ENCODE measurements at regions of chr12 and their contacts with region 1.

Region 1: GRCh38 chr12:53205747-53206419 is 1.2 kb downstream of the ITGB7 start:
- DNase-seq: peak; percentile 92
- H3K4me3 Mint-ChIP-seq: peak overlapping the region; percentile 84
- H3K27ac Mint-ChIP-seq: peak overlapping the region; percentile 83
- H3K4me1 Mint-ChIP-seq: peaks cover 77% of the 10 kb centered on the region
- H3K27me3 Mint-ChIP-seq: no peaks in the 10 kb centered on the region

Region 2: GRCh38 chr12:52543985-52544883 is 661.6 kb before region 1 on chr12:
- CTCF ChIA-PET with region 1: no interaction called
- POLR2A ChIA-PET with region 1: no interaction called
- intact Hi-C with region 1: no loop called
- DNase-seq: no peak
- H3K4me3 Mint-ChIP-seq: no peak overlapping the region
- H3K27ac Mint-ChIP-seq: no peak overlapping the region
- H3K4me1 Mint-ChIP-seq: no peaks in the 10 kb centered on the region
- H3K27me3 Mint-ChIP-seq: no peaks in the 10 kb centered on the region

Region 3: DNA sequence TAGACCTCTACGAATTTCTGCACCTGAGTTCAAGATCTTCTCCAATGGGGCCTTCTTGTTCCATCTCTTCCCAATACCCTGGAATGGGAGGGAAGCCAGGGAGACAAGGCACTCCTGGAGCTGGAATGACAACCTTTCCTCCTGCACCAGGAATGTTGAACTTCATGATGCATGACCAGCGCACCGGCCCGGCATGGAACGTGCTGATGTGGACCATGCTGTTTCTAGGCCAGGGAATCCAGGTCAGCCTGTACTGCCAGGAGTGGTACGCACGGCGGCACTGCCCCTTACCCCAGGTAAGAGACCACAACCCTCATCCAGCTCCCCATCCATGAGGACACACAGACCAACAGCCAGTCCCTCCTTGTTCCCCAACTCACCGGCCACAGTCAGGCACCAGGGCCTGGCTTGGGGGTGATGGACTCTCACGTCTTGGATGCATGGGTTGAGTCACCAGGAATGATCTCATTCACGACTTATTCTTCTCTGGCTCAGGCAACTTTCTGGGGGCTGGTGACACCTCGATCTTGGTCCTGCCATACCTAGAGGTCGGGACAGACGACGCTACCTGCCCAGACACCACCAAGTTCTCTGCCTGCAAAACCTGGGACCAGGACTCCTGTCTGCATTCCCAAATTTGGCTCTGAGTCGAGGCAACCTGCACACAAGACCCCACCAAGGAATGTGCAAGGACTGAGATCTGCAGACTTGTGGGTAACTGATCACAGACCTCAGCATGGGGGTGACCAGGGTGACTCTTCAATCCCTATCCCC is 82.1 kb before region 1 on chr12:
- CTCF ChIA-PET with region 1: no interaction called
- POLR2A ChIA-PET with region 1: no interaction called
- intact Hi-C with region 1: no loop called
- DNase-seq: no peak
- H3K4me3 Mint-ChIP-seq: no peak overlapping the region
- H3K27ac Mint-ChIP-seq: no peak overlapping the region
- H3K4me1 Mint-ChIP-seq: no peaks in the 10 kb centered on the region
- H3K27me3 Mint-ChIP-seq: no peaks in the 10 kb centered on the region

Region 4: DNA sequence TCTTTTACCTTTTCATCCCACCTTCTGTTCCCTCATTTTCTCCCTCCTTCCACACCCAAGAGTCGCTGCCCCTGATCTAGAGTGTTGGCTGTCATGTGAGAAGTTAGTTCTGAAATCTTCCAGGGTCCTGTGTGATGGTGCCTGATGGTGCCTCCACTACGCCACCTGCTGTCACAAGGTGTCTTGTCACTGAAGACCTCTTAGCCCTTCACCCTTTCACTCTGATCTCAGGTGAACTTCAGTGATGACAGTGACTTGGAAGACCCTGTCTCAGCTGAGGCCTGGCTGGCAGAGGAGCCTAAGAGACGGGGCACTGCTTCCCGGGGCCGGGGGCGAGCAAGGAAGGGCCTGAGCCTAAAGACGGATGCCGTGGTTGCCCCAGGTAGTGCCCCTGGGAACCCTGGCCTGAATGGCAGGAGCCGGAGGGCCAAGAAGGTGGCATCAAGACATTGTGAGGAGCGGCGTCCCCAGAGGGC is 81.9 kb after region 1 on chr12:
- CTCF ChIA-PET with region 1: interaction called, 21 read pairs
- POLR2A ChIA-PET with region 1: no interaction called
- intact Hi-C with region 1: no loop called
- DNase-seq: peak; percentile 76
- H3K4me3 Mint-ChIP-seq: no peak overlapping the region
- H3K27ac Mint-ChIP-seq: peak overlapping the region; percentile 68
- H3K4me1 Mint-ChIP-seq: peaks cover 19% of the 10 kb centered on the region
- H3K27me3 Mint-ChIP-seq: no peaks in the 10 kb centered on the region

Region 5: GRCh38 chr12:53820516-53821306 is 614.8 kb after region 1 on chr12:
- CTCF ChIA-PET with region 1: no interaction called
- POLR2A ChIA-PET with region 1: no interaction called
- intact Hi-C with region 1: no loop called
- DNase-seq: no peak
- H3K4me3 Mint-ChIP-seq: no peak overlapping the region
- H3K27ac Mint-ChIP-seq: no peak overlapping the region
- H3K4me1 Mint-ChIP-seq: no peaks in the 10 kb centered on the region
- H3K27me3 Mint-ChIP-seq: peaks cover 50% of the 10 kb centered on the region